ENCODE measurements at regions of chr15 and their contacts with region 1.

Region 1: DNA sequence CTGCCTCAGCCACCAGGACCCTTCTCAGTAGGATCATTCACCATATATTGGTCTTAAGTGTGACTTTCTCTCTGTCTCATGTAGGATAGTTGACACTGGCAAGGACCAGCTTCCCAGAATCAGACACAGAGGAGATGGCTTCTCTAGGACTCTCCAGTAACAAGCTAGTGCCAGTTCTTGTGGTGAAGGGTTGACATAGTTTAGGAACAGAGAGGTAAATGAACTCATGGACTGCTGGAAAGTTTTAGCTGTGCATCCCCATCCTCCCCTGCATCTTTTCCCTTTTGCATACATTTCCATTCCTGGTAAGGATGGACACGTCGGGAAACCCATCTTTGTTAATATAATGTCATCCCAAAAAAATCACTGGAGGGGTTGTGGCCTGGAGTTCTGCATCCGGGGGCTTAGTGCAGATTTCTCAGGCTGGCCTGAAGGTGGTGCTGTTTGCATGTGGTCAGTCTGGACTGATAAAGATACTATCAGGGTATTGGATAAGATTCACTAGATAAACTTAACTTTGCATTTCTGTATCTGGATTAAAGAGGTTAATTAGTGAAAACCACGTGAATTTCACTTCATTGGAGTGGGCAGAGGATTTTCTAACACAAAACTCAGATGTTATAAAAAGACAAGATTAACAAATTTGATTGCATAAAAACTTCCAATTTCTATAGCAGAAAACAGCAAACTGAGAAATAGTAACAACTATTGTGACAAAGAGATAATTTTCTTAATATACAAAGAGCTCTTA is 110.8 kb downstream of the TBC1D2B start:
- DNase-seq: peak in 8 of 9 experiments; percentile 30 to 71 (median 55)
- ATAC-seq: peak; percentile 42
- H3K4me3 ChIP-seq: no peak overlapping the region
- H3K4me3 Mint-ChIP-seq: no peak overlapping the region
- H3K27ac ChIP-seq: no peak overlapping the region
- H3K27ac Mint-ChIP-seq: no peak overlapping the region
- H3K4me1 ChIP-seq: no peaks in the 10 kb centered on the region
- H3K4me1 Mint-ChIP-seq: no peaks in the 10 kb centered on the region
- H3K27me3 ChIP-seq: no peaks in the 10 kb centered on the region
- H3K27me3 Mint-ChIP-seq: peaks cover 2% of the 10 kb centered on the region
- CTCF ChIP-seq: peak; percentile 70

Region 2: GRCh38 chr15:77901974-77902750 is 64.6 kb before region 1 on chr15:
- CTCF ChIA-PET with region 1: no interaction called
- POLR2A ChIA-PET with region 1: no interaction called
- intact Hi-C with region 1: no loop called
- DNase-seq: no peak
- ATAC-seq: no peak
- H3K4me3 ChIP-seq: no peak overlapping the region
- H3K4me3 Mint-ChIP-seq: no peak overlapping the region
- H3K27ac ChIP-seq: no peak overlapping the region
- H3K27ac Mint-ChIP-seq: no peak overlapping the region
- H3K4me1 ChIP-seq: no peaks in the 10 kb centered on the region
- H3K4me1 Mint-ChIP-seq: no peaks in the 10 kb centered on the region
- H3K27me3 ChIP-seq: no peaks in the 10 kb centered on the region
- H3K27me3 Mint-ChIP-seq: no peaks in the 10 kb centered on the region
- CTCF ChIP-seq: no peak

Region 3: DNA sequence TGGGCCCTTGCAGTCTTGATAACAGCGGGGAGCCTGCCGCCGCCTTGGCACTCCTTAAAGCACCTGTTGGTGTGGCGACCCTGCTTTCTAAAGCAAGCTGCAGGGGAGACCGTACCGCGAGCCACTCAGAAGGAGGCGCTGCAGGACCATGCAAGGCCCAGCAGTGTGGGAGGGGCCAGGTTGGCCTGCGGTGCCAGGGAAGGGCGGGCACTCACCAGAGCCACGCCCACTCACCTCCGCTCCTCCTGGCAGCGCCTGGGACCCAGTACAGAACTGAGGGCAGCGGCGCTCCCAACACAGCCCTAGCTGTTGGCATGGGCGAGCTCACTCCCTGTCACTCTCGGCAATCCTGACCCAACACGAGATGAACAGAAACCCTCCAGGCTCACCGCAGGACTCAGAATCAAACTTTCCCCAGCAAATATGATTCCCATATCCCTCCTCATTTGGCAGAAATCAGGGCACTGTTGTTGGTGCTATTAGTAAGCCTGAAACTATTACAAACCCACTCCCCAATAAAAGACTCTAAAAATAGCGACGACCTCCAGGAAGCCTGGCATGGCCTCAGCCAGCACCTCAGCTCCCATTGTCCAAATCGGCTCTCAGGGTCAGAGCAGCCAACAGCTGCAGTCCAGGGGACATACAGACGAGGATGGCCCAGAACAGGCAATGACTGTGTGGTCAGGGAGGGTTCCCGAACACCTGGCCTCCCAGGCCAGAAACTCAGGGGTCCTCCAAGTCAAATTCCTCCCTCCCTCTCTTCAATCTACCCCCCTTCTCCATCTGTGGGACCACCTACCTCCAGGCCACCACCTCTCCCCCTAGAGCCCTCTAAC is 33.6 kb after region 1 on chr15:
- CTCF ChIA-PET with region 1: interaction called, 10 read pairs
- POLR2A ChIA-PET with region 1: no interaction called
- intact Hi-C with region 1: loop called in 1 of 2 experiments (anchors 2 kb)
- DNase-seq: peak; percentile 56 to 85 (median 79)
- ATAC-seq: peak; percentile 99
- H3K4me3 ChIP-seq: no peak overlapping the region
- H3K4me3 Mint-ChIP-seq: no peak overlapping the region
- H3K27ac ChIP-seq: no peak overlapping the region
- H3K27ac Mint-ChIP-seq: peak overlapping the region; percentile 64
- H3K4me1 ChIP-seq: no peaks in the 10 kb centered on the region
- H3K4me1 Mint-ChIP-seq: peaks cover 6% of the 10 kb centered on the region
- H3K27me3 ChIP-seq: no peaks in the 10 kb centered on the region
- H3K27me3 Mint-ChIP-seq: no peaks in the 10 kb centered on the region
- CTCF ChIP-seq: peak; percentile 52

Measured in CD8-positive, alpha-beta T cell (primary cell).